Uterus (tissue), 4 donors: ENCODE measurements at regions of chr1 and their contacts with region 1.

Region 1: DNA sequence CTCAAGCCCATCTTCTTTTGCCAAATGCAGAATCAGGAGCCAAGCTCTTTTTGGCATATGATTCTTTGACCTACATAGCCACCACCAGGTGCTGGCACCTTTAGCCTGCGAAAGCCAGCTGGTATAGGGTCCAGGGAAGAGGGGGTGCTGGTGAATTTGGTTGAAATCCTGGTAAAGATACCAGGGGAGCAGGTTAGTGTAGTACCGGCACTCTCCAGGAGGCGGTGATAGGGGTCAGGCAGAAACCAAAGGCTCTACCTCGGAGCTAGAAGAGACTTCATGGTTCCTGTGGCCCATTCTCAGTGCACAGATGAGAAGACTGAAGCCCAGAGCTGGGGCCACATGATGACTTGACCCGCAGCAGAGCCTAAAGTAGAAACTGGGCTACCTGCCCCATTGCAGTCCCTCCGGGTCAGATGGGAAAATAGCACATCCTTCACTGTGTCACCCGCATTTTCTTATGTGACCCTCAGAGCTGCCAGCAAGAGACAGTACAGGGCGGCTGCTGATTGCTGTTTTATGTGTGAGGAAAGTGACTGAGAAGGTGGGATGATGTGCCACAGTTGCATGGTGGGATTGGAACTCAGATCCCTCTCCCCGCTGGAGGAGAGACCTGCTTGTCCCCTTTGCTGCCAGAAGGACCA is 36.0 kb upstream of the IL19 start:
- DNase-seq: peak in 1 of 2 donors; percentile 46
- H3K4me3 ChIP-seq: no peak overlapping the region
- H3K27ac ChIP-seq: no peak overlapping the region
- H3K4me1 ChIP-seq: no peaks in the 10 kb centered on the region
- H3K27me3 ChIP-seq: no peaks in the 10 kb centered on the region
- CTCF ChIP-seq: peak; percentile 50 to 69 (median 55)
- POLR2A ChIP-seq: no peak

Region 2: GRCh38 chr1:206672844-206673758 is 61.5 kb before region 1 on chr1:
- intact Hi-C with region 1: no loop called
- DNase-seq: no peak
- H3K4me3 ChIP-seq: no peak overlapping the region
- H3K27ac ChIP-seq: peak overlapping the region; percentile 87 to 93
- H3K4me1 ChIP-seq: peaks cover 6 to 7% of the 10 kb centered on the region in 2 donors
- H3K27me3 ChIP-seq: no peaks in the 10 kb centered on the region
- CTCF ChIP-seq: no peak
- POLR2A ChIP-seq: no peak

Region 3: GRCh38 chr1:206684478-206685333 is 49.9 kb before region 1 on chr1 and contains the start of gene MAPKAPK2:
- intact Hi-C with region 1: no loop called
- DNase-seq: peak; percentile 75 to 81
- H3K4me3 ChIP-seq: peak within 1 kb of the TSS; percentile 46 to 91
- H3K27ac ChIP-seq: peak within 1 kb of the TSS; percentile 95 to 99
- H3K4me1 ChIP-seq: peaks cover 0 to 20% of the 10 kb centered on the region in 2 donors
- H3K27me3 ChIP-seq: no peaks in the 10 kb centered on the region
- CTCF ChIP-seq: no peak
- POLR2A ChIP-seq: peak in 1 of 2 donors; percentile 74
- total RNA-seq, gene MAPKAPK2: 17.1 to 89.2 (median 27.4) TPM

Region 4: GRCh38 chr1:206912445-206913095 is 177.9 kb after region 1 on chr1:
- intact Hi-C with region 1: loop called (anchors 5 kb)
- DNase-seq: peak; percentile 69 to 76
- H3K4me3 ChIP-seq: no peak overlapping the region
- H3K27ac ChIP-seq: no peak overlapping the region
- H3K4me1 ChIP-seq: peaks cover 0 to 7% of the 10 kb centered on the region in 2 donors
- H3K27me3 ChIP-seq: no peaks in the 10 kb centered on the region
- CTCF ChIP-seq: peak; percentile 79 to 88 (median 86)
- POLR2A ChIP-seq: no peak